Activated CD4-positive, alpha-beta memory T cell treated with anti-CD3 and anti-CD28 coated beads for 36 hours (primary cell): ENCODE measurements at regions of chr6 and their contacts with region 1.

Region 1: DNA sequence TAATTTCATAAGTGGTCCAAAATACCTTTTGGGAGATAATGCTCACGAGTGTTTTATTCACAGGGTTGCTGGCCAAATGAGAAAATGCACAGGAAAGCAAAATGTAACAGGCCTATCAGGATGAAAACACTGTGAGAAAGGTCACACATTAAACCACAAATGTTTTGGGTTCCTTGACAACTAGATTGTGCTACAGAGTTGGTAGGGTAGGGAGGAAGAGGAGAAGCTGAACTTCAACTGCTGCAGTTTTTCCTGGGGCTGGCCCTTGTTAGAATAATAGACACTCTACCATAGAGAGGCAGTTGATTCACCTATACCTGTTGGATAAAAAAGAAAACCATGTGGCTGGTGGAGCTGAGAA is 28.1 kb upstream of the PAQR8 start:
- DNase-seq: no peak
- H3K4me3 Mint-ChIP-seq: no peak overlapping the region
- H3K27ac Mint-ChIP-seq: peak overlapping the region; percentile 49
- H3K4me1 Mint-ChIP-seq: peaks cover 54% of the 10 kb centered on the region
- H3K27me3 Mint-ChIP-seq: no peaks in the 10 kb centered on the region

Region 2: GRCh38 chr6:52304983-52305390 is 28.8 kb before region 1 on chr6:
- CTCF ChIA-PET with region 1: no interaction called
- POLR2A ChIA-PET with region 1: no interaction called
- intact Hi-C with region 1: loop called (anchors 2 kb)
- DNase-seq: no peak
- H3K4me3 Mint-ChIP-seq: peak overlapping the region; percentile 28
- H3K27ac Mint-ChIP-seq: peak overlapping the region; percentile 74
- H3K4me1 Mint-ChIP-seq: peaks cover 71% of the 10 kb centered on the region
- H3K27me3 Mint-ChIP-seq: no peaks in the 10 kb centered on the region

Region 3: GRCh38 chr6:52317841-52318581 is 15.8 kb before region 1 on chr6:
- CTCF ChIA-PET with region 1: no interaction called
- POLR2A ChIA-PET with region 1: no interaction called
- intact Hi-C with region 1: loop called (anchors 2 kb)
- DNase-seq: no peak
- H3K4me3 Mint-ChIP-seq: no peak overlapping the region
- H3K27ac Mint-ChIP-seq: no peak overlapping the region
- H3K4me1 Mint-ChIP-seq: peaks cover 23% of the 10 kb centered on the region
- H3K27me3 Mint-ChIP-seq: no peaks in the 10 kb centered on the region

Region 4: GRCh38 chr6:52454556-52454955 is 120.7 kb after region 1 on chr6:
- CTCF ChIA-PET with region 1: no interaction called
- POLR2A ChIA-PET with region 1: no interaction called
- intact Hi-C with region 1: no loop called
- DNase-seq: no peak
- H3K4me3 Mint-ChIP-seq: no peak overlapping the region
- H3K27ac Mint-ChIP-seq: no peak overlapping the region
- H3K4me1 Mint-ChIP-seq: no peaks in the 10 kb centered on the region
- H3K27me3 Mint-ChIP-seq: no peaks in the 10 kb centered on the region

Region 5: GRCh38 chr6:52839119-52840055 is 505.6 kb after region 1 on chr6:
- CTCF ChIA-PET with region 1: no interaction called
- POLR2A ChIA-PET with region 1: no interaction called
- intact Hi-C with region 1: no loop called
- DNase-seq: peak; percentile 60
- H3K4me3 Mint-ChIP-seq: no peak overlapping the region
- H3K27ac Mint-ChIP-seq: no peak overlapping the region
- H3K4me1 Mint-ChIP-seq: no peaks in the 10 kb centered on the region
- H3K27me3 Mint-ChIP-seq: peaks cover 29% of the 10 kb centered on the region